Mammary epithelial cell (primary cell): ENCODE measurements at regions of chr7 and their contacts with region 1.

Region 1: GRCh38 chr7:92691578-92691977 is 101.4 kb upstream of the FAM133B start:
- DNase-seq: peak; percentile 54
- H3K4me3 ChIP-seq: no peak overlapping the region
- H3K27ac ChIP-seq: no peak overlapping the region
- H3K4me1 ChIP-seq: peaks cover 14% of the 10 kb centered on the region
- H3K27me3 ChIP-seq: no peaks in the 10 kb centered on the region
- CTCF ChIP-seq: peak; percentile 48 to 63

Region 2: GRCh38 chr7:92621026-92621540 is 70.5 kb before region 1 on chr7:
- CTCF ChIA-PET with region 1: no interaction called
- dilution Hi-C with region 1: no loop called
- in situ Hi-C with region 1: no loop called
- intact Hi-C with region 1: loop called (anchors 1 kb)
- DNase-seq: peak; percentile 78
- H3K4me3 ChIP-seq: no peak overlapping the region
- H3K27ac ChIP-seq: peak overlapping the region; percentile 54
- H3K4me1 ChIP-seq: peaks cover 36% of the 10 kb centered on the region
- H3K27me3 ChIP-seq: no peaks in the 10 kb centered on the region
- CTCF ChIP-seq: peak; percentile 67 to 72

Region 3: DNA sequence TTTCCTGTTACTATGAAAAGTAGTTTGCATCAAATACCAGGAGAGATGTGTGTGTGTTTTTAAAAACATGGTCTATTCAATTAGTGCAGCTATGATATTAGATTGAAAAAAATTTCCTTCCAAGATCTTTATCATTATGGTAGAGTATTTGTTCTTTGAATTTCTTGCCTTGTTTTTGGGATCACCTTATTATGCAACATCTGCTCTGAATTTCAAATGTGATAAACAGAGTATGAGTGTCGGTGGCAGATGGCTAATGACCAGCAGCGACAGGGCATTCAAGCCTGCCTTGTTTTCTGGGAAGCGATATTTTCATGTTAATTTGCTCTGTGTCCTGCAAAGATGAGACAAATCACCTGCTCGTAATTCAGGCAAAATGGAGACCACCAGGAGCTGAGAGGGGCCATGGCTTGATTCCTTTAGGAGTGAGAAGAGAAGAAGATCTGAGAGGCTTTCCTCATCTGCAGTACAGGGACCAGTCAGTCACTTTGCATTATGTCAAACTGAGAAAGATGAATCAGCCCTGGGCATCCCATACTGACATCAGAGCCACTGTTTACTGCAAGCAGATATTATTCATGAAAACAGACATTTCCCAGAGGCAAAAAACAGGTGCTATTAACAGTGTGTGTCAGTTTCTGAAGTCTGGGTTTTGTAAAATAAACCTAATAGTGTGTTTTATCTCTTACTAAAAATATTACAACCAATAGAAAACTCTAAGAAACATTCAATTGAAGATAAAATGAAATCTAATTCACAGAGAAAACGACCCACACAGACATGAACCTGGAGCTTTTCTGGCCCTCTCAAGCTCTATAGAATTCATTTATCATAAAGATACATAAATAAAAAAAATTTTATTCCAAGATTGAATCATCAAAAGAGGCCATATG is 77.2 kb after region 1 on chr7:
- CTCF ChIA-PET with region 1: no interaction called
- dilution Hi-C with region 1: no loop called
- in situ Hi-C with region 1: no loop called
- intact Hi-C with region 1: loop called (anchors 5 kb)
- DNase-seq: peak; percentile 71
- H3K4me3 ChIP-seq: no peak overlapping the region
- H3K27ac ChIP-seq: no peak overlapping the region
- H3K4me1 ChIP-seq: peaks cover 42% of the 10 kb centered on the region
- H3K27me3 ChIP-seq: no peaks in the 10 kb centered on the region
- CTCF ChIP-seq: no peak

Region 4: GRCh38 chr7:92916674-92917224 is 225.2 kb after region 1 on chr7:
- CTCF ChIA-PET with region 1: no interaction called
- dilution Hi-C with region 1: no loop called
- in situ Hi-C with region 1: no loop called
- intact Hi-C with region 1: loop called (anchors 5 kb)
- DNase-seq: peak; percentile 78
- H3K4me3 ChIP-seq: no peak overlapping the region
- H3K27ac ChIP-seq: peak overlapping the region; percentile 92
- H3K4me1 ChIP-seq: peaks cover 13% of the 10 kb centered on the region
- H3K27me3 ChIP-seq: no peaks in the 10 kb centered on the region
- CTCF ChIP-seq: no peak

Region 5: DNA sequence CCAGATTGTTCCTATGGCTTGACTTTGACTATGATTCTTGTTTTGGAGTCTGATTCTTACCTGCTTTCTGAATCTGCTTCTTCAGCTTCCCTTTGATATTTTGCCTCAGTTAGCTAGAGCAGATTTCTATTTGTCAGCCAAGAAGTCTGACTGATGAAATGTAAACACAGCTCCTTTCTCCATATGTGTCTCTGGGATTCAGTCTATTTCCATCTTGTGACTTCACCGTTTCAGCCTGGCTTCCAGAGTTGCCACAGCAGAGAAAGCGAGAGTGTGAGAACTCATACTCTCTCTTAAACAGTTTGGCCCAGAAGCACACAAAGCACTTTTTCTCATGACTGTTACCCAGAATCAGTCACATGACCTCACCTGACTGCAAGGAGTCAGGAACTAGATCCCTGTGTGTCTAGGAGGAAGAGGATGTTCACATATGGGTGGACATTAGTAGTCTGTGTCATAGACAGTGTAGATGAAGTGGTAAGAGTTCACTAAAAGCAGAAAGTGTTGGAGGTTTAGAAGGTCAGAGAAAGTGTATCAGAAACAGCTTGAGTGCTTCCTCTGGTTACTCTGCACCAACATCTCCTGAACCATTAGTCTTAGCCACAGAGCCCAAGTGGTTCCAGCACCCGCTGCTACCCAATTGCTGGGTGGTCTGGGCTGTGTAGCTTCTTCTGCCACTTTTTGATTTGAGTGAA is 248.2 kb after region 1 on chr7:
- CTCF ChIA-PET with region 1: no interaction called
- dilution Hi-C with region 1: no loop called
- in situ Hi-C with region 1: no loop called
- intact Hi-C with region 1: no loop called
- DNase-seq: no peak
- H3K4me3 ChIP-seq: no peak overlapping the region
- H3K27ac ChIP-seq: no peak overlapping the region
- H3K4me1 ChIP-seq: no peaks in the 10 kb centered on the region
- H3K27me3 ChIP-seq: no peaks in the 10 kb centered on the region
- CTCF ChIP-seq: no peak

Region 6: GRCh38 chr7:93043385-93043985 is 351.9 kb after region 1 on chr7:
- CTCF ChIA-PET with region 1: no interaction called
- dilution Hi-C with region 1: no loop called
- in situ Hi-C with region 1: no loop called
- intact Hi-C with region 1: loop called (anchors 5 kb)
- DNase-seq: peak; percentile 97
- H3K4me3 ChIP-seq: peak overlapping the region; percentile 22 to 28 (median 27)
- H3K27ac ChIP-seq: peak overlapping the region; percentile 83
- H3K4me1 ChIP-seq: peaks cover 28% of the 10 kb centered on the region
- H3K27me3 ChIP-seq: no peaks in the 10 kb centered on the region
- CTCF ChIP-seq: peak in 1 of 2 donors; percentile 13